HepG2 (cell line): ENCODE measurements at regions of chr12 and their contacts with region 1.

Region 1: GRCh38 chr12:68610370-68611093 is at the start of gene RAP1B:
- DNase-seq: peak; percentile 79
- ATAC-seq: peak; percentile 96
- H3K4me3 ChIP-seq: peak within 1 kb of the TSS; percentile 83 to 99 (median 86)
- H3K27ac ChIP-seq: peak within 1 kb of the TSS; percentile 87
- H3K4me1 ChIP-seq: peaks cover 41% of the 10 kb centered on the region
- H3K27me3 ChIP-seq: no peaks in the 10 kb centered on the region; a peak in 1 of 5 replicates
- CTCF ChIP-seq: no peak
- EP300 ChIP-seq: no peak
- POLR2A ChIP-seq: peak; percentile 92
- RAD21 ChIP-seq: no peak; the same call in none of the 2 replicates
- total RNA-seq, gene RAP1B: 92.7 and 129 TPM in 2 replicates

Region 2: DNA sequence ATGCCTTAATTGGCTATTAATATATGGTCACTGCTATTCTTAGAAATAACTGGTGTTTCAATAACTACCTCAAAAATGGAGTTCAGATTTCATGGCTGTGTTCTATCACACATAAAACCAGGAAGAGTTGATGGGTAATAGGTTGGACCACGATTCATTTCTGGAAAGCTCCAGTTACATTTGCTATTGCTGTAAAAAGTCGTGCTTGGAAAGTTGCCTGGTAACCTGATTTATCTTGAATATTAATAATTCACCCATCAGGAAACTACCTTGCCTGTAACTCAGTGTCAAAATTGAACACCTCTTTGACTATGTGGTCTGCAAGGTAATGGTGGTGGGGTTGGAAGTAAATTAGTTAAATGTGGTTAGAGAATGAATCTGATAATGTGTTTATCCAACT is 725.9 kb before region 1 on chr12:
- CTCF ChIA-PET with region 1: no interaction called
- POLR2A ChIA-PET with region 1: no interaction called
- in situ Hi-C with region 1: no loop called
- intact Hi-C with region 1: no loop called
- DNase-seq: no peak
- ATAC-seq: no peak
- H3K4me3 ChIP-seq: no peak overlapping the region
- H3K27ac ChIP-seq: no peak overlapping the region
- H3K4me1 ChIP-seq: no peaks in the 10 kb centered on the region
- H3K27me3 ChIP-seq: no peaks in the 10 kb centered on the region
- CTCF ChIP-seq: no peak
- EP300 ChIP-seq: no peak
- POLR2A ChIP-seq: no peak
- RAD21 ChIP-seq: no peak

Region 3: DNA sequence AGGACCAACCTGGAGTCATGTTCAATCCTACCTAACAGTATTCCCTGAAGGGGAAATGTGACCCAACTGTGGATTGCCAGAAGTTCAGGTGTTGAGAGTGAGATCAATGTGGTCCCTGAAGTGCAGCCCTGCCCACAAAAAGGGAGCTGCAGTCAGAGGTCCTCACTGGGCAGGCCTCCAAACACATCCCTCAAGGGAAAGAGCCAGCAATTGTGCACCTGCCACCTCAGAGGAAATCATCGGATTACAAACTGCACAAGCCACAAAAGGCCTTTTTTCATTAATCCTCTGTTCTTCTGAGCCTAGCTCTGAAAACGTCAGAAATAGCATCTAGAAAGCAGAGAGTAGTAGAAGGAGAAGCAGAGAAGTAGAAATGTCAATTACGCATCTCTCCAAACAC is 267.6 kb before region 1 on chr12:
- CTCF ChIA-PET with region 1: no interaction called
- POLR2A ChIA-PET with region 1: interaction called, 3 read pairs
- in situ Hi-C with region 1: no loop called
- intact Hi-C with region 1: loop called (anchors 5 kb)
- DNase-seq: no peak
- ATAC-seq: no peak
- H3K4me3 ChIP-seq: no peak overlapping the region
- H3K27ac ChIP-seq: no peak overlapping the region
- H3K4me1 ChIP-seq: peaks cover 52% of the 10 kb centered on the region
- H3K27me3 ChIP-seq: no peaks in the 10 kb centered on the region
- CTCF ChIP-seq: no peak
- EP300 ChIP-seq: no peak
- POLR2A ChIP-seq: no peak
- RAD21 ChIP-seq: no peak

Region 4: DNA sequence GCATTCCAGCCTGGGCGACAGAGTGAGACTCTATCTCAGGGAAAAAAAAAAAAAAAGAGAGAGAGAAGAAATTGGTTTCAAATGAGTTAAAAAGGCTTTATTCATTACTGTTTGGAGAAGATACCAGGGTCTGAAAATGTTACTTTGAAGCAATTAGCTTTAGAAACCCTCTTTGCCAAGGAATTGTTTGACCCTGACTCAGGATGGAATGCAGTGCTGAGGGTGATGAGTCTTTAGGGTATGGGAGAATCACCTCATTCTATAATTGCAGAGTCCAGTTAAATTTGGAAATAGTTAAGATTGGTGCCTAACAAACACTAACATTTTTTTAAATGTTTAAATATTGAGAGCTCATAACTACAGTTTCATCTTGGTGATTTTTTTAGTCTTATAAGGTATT is 13.5 kb after region 1 on chr12:
- CTCF ChIA-PET with region 1: no interaction called
- POLR2A ChIA-PET with region 1: interaction called, 10 read pairs
- in situ Hi-C with region 1: no loop called
- intact Hi-C with region 1: no loop called
- DNase-seq: no peak
- ATAC-seq: no peak
- H3K4me3 ChIP-seq: no peak overlapping the region
- H3K27ac ChIP-seq: no peak overlapping the region
- H3K4me1 ChIP-seq: peaks cover 33% of the 10 kb centered on the region
- H3K27me3 ChIP-seq: no peaks in the 10 kb centered on the region
- CTCF ChIP-seq: no peak
- EP300 ChIP-seq: no peak
- POLR2A ChIP-seq: no peak
- RAD21 ChIP-seq: no peak